ENCODE measurements at regions of chr7 and their contacts with region 1.

Region 1: DNA sequence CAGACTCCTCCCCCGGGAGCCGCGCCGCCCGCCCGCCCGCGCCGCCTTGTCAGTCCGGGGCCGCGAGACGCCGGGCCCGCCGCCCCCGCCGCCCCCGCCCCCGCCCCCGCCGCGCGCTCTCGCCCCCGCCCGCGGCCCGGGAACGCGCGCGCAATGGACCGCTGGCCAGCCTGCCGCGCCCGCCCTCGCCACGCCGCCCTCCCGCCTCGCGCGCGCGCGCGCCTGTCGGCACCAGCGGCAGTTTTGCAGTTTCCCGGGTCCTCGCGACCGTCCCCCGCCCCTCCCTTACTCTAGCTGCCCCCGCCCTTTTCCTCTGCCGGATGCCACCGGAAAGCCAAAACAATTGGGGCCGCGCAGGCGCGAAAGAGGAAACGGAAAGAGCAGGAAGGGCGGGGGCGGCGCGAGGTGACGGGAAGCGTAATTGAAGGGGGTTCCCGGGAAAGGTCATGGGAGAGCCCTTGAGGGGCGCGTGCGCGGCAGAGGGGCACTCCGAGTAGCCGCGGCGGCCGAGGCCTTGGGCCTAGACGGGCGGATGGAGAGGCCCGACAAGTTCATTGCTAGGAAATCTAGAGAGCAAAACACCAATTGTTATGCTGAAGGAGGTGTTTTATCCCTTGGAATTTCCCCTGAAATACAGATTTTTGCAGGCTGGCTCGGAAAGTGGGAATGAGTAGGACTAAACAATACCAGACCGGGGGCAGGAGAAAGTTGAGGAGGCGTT is 400 bp upstream of the KBTBD2 start:
- DNase-seq: peak; percentile 95 to 98
- H3K4me3 ChIP-seq: peak overlapping the region; percentile 86
- H3K4me3 Mint-ChIP-seq: peak overlapping the region; percentile 99
- H3K27ac Mint-ChIP-seq: peak overlapping the region; percentile 95
- H3K4me1 ChIP-seq: peaks cover 41% of the 10 kb centered on the region
- H3K4me1 Mint-ChIP-seq: peaks cover 25% of the 10 kb centered on the region
- H3K27me3 ChIP-seq: no peaks in the 10 kb centered on the region
- H3K27me3 Mint-ChIP-seq: no peaks in the 10 kb centered on the region
- CTCF ChIP-seq: no peak

Region 2: GRCh38 chr7:32495298-32496176 is 396.4 kb before region 1 on chr7 and contains the start of gene AVL9:
- CTCF ChIA-PET with region 1: no interaction called
- POLR2A ChIA-PET with region 1: no interaction called
- intact Hi-C with region 1: loop called (anchors 2 kb)
- DNase-seq: peak; percentile 99
- H3K4me3 ChIP-seq: peak within 1 kb of the TSS; percentile 93
- H3K4me3 Mint-ChIP-seq: peak within 1 kb of the TSS; percentile 79
- H3K27ac Mint-ChIP-seq: peak within 1 kb of the TSS; percentile 83
- H3K4me1 ChIP-seq: 0 out of 2 replicates have a peak, but pooled peaks cover 9% of the 10 kb centered on the region
- H3K4me1 Mint-ChIP-seq: no peaks in the 10 kb centered on the region
- H3K27me3 ChIP-seq: no peaks in the 10 kb centered on the region
- H3K27me3 Mint-ChIP-seq: no peaks in the 10 kb centered on the region
- CTCF ChIP-seq: no peak
- total RNA-seq, gene AVL9: 39.7 and 41.0 TPM in 2 replicates

Region 3: GRCh38 chr7:32846701-32847100 is 45.3 kb before region 1 on chr7:
- CTCF ChIA-PET with region 1: interaction called, 13 read pairs
- POLR2A ChIA-PET with region 1: interaction called, 4 read pairs
- intact Hi-C with region 1: loop called (anchors 1 kb)
- DNase-seq: peak; percentile 87 to 91
- H3K4me3 ChIP-seq: no peak overlapping the region
- H3K4me3 Mint-ChIP-seq: no peak overlapping the region
- H3K27ac Mint-ChIP-seq: no peak overlapping the region
- H3K4me1 ChIP-seq: no peaks in the 10 kb centered on the region; the same call in 1 of the 2 replicates
- H3K4me1 Mint-ChIP-seq: peaks cover 7% of the 10 kb centered on the region
- H3K27me3 ChIP-seq: no peaks in the 10 kb centered on the region
- H3K27me3 Mint-ChIP-seq: peaks cover 3% of the 10 kb centered on the region
- CTCF ChIP-seq: peak; percentile 89 to 94

Region 4: GRCh38 chr7:32881074-32882017 is 10.6 kb before region 1 on chr7:
- CTCF ChIA-PET with region 1: interaction called, 3 read pairs
- POLR2A ChIA-PET with region 1: no interaction called
- intact Hi-C with region 1: loop called (anchors 1 kb)
- DNase-seq: no peak
- H3K4me3 ChIP-seq: no peak overlapping the region
- H3K4me3 Mint-ChIP-seq: no peak overlapping the region
- H3K27ac Mint-ChIP-seq: peak overlapping the region; percentile 57
- H3K4me1 ChIP-seq: peaks cover 11% of the 10 kb centered on the region
- H3K4me1 Mint-ChIP-seq: peaks cover 19% of the 10 kb centered on the region
- H3K27me3 ChIP-seq: no peaks in the 10 kb centered on the region
- H3K27me3 Mint-ChIP-seq: no peaks in the 10 kb centered on the region
- CTCF ChIP-seq: no peak

Region 5: GRCh38 chr7:32942786-32943653 is 51.1 kb after region 1 on chr7:
- CTCF ChIA-PET with region 1: interaction called, 5 read pairs
- POLR2A ChIA-PET with region 1: no interaction called
- intact Hi-C with region 1: loop called (anchors 2 kb)
- DNase-seq: peak; percentile 80 to 90
- H3K4me3 ChIP-seq: peak overlapping the region; percentile 62
- H3K4me3 Mint-ChIP-seq: peak overlapping the region; percentile 84
- H3K27ac Mint-ChIP-seq: no peak overlapping the region
- H3K4me1 ChIP-seq: peaks cover 10% of the 10 kb centered on the region; the same call in 1 of the 2 replicates
- H3K4me1 Mint-ChIP-seq: peaks cover 9% of the 10 kb centered on the region
- H3K27me3 ChIP-seq: no peaks in the 10 kb centered on the region
- H3K27me3 Mint-ChIP-seq: no peaks in the 10 kb centered on the region
- CTCF ChIP-seq: peak; percentile 46 to 48

Region 6: DNA sequence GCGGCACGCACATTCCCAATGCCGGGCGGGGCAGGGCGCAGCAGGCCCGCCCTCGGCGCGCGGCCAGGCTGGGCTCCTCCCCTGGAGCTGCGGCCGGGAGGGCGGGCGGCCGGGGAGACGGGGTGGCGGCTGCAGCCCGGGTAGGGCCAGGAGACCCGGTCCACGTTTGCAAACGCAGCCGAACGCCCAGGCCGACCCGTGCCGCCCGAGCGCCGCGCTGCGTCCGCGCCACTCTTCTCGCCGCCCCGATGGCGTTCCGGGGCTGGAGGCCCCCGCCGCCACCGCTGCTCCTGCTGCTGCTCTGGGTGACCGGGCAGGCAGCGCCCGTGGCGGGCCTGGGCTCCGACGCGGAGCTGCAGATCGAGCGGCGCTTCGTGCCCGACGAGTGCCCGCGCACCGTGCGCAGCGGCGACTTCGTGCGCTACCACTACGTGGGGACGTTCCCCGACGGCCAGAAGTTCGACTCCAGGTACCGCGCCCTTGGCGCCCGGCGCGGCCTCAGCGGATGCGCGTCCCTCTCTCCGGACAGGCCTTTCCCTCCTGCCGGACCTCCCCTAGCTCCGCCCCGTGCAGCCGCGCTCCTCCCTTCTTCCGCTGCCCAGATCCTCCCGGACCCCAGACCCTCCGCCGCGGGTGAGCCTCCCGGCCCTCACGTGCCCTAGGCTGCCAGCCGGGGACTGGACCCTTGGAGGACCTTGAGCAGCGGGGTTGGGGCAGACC is 65.5 kb after region 1 on chr7 and contains the start of gene FKBP9:
- CTCF ChIA-PET with region 1: no interaction called
- POLR2A ChIA-PET with region 1: interaction called, 4 read pairs
- intact Hi-C with region 1: loop called (anchors 1 kb)
- DNase-seq: peak; percentile 86 to 93
- H3K4me3 ChIP-seq: peak within 1 kb of the TSS; percentile 95
- H3K4me3 Mint-ChIP-seq: peak within 1 kb of the TSS; percentile 82
- H3K27ac Mint-ChIP-seq: peak within 1 kb of the TSS; percentile 55
- H3K4me1 ChIP-seq: 0 out of 2 replicates have a peak, but pooled peaks cover 6% of the 10 kb centered on the region
- H3K4me1 Mint-ChIP-seq: no peaks in the 10 kb centered on the region
- H3K27me3 ChIP-seq: no peaks in the 10 kb centered on the region
- H3K27me3 Mint-ChIP-seq: no peaks in the 10 kb centered on the region
- CTCF ChIP-seq: no peak
- total RNA-seq, gene FKBP9: 74.3 and 82.6 TPM in 2 replicates

Region 7: DNA sequence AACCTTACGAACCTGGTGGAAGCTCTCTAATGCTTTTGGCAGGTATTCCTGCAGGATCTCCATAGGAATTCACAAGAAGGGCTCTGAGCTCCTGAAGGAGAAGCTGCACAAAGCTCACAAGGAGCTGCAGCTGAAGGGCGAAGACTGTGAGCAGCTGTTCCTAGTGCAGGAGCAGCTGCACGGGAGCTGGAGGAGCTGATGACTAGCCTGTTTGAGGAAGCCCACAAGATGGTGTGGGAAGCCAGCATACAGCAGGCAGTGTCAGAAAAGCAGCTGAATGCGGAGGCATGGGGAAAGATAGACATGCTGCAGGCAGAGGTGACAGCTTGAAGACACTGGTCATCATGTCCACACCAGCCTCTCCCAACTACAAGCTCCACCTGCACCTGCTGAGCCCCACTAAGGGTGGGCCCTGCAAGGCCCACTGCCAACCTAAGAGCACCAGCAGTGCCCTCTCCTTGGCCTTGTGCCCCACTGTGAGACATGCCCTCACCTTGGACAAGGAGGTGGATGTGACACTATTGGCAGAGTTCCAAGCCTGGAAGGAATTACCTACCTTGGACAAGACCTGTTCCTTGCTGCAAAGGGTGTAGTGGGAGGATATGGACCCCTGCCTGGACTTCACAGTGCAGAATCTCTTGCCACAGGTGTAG is 488.1 kb after region 1 on chr7:
- CTCF ChIA-PET with region 1: no interaction called
- POLR2A ChIA-PET with region 1: no interaction called
- intact Hi-C with region 1: no loop called
- DNase-seq: no peak
- H3K4me3 ChIP-seq: no peak overlapping the region
- H3K4me3 Mint-ChIP-seq: no peak overlapping the region
- H3K27ac Mint-ChIP-seq: no peak overlapping the region
- H3K4me1 ChIP-seq: no peaks in the 10 kb centered on the region
- H3K4me1 Mint-ChIP-seq: no peaks in the 10 kb centered on the region
- H3K27me3 ChIP-seq: no peaks in the 10 kb centered on the region
- H3K27me3 Mint-ChIP-seq: no peaks in the 10 kb centered on the region
- CTCF ChIP-seq: no peak

Measured in Caco-2 (cell line).